ENCODE measurements at regions of chr12 and their contacts with region 1.

Region 1: DNA sequence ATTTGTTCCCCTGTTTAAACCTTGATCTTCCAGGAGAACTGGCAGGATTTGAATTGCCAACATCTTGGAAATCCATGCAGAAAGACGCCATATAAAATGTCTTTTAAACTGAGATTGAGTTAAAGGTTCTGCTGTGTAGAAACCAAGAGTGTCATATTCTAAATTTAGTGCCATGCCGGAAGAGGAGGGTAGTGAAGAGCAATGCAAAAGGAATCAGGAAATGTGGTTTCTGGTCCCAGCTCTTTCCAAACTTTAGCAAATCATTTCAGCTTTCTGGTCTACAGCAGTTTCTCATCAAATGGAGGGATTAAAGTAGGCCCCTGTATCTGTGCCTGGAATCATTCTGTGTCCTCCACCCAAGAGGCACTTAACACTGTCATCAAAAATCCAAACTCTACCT is 85.7 kb downstream of the BTG1 start:
- DNase-seq: no peak
- H3K4me3 Mint-ChIP-seq: no peak overlapping the region
- H3K27ac Mint-ChIP-seq: no peak overlapping the region
- H3K4me1 Mint-ChIP-seq: peaks cover 73% of the 10 kb centered on the region
- H3K27me3 Mint-ChIP-seq: no peaks in the 10 kb centered on the region

Region 2: GRCh38 chr12:91811481-91812287 is 248.3 kb before region 1 on chr12:
- intact Hi-C with region 1: loop called (anchors 10 kb)
- DNase-seq: peak; percentile 37
- H3K4me3 Mint-ChIP-seq: no peak overlapping the region
- H3K27ac Mint-ChIP-seq: no peak overlapping the region
- H3K4me1 Mint-ChIP-seq: peaks cover 15% of the 10 kb centered on the region
- H3K27me3 Mint-ChIP-seq: no peaks in the 10 kb centered on the region

Region 3: DNA sequence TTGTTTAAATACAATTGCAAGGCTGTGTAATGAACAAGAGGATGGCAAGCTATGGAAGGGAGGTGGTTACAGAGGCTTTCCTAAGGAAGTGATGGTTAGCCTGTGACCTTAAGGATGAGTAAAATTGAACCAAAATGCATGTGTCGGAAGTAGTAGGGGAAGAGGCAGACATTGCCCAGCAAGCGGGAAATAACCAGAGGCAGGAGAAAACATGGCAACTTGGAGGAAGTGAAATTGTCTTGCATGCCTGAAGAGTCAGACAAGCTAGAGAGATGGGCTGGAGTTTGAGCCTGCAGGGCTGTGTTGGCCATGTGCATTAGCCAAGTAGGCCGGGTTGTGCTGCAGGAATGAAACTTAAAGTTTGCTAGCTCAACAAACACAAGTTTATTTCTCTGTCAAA is 10.6 kb before region 1 on chr12:
- intact Hi-C with region 1: loop called (anchors 1 kb)
- DNase-seq: no peak
- H3K4me3 Mint-ChIP-seq: no peak overlapping the region
- H3K27ac Mint-ChIP-seq: no peak overlapping the region
- H3K4me1 Mint-ChIP-seq: peaks cover 71% of the 10 kb centered on the region
- H3K27me3 Mint-ChIP-seq: no peaks in the 10 kb centered on the region

Region 4: DNA sequence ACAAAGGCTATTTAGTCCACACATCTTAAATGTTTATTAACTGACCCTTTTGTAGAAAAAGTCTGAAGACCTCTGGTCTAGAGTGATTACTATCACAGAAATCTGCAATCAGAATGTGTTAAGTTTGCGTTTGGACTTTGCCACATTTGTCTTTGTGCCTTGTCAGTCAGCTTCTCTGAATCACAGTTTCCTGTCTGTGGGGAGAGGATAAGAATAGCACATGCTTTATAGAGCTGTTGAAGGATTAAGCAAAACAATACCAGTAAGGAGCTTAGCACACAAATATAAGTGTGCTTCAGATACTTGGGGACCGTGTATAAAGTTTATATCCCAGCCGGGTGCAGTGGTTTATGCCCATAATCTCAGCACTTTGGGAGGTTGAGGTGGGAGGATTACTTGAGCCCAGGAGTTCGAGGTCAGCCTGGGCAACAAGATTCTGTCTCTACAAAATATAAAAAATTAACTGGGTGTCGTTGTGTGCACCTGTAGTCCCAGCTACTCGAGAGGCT is 148.7 kb after region 1 on chr12:
- intact Hi-C with region 1: loop called (anchors 10 kb)
- DNase-seq: peak; percentile 19
- H3K4me3 Mint-ChIP-seq: peak overlapping the region; percentile 22
- H3K27ac Mint-ChIP-seq: peak overlapping the region; percentile 24
- H3K4me1 Mint-ChIP-seq: peaks cover 37% of the 10 kb centered on the region
- H3K27me3 Mint-ChIP-seq: no peaks in the 10 kb centered on the region

Measured in activated T-helper 2 cell treated with anti-CD3 and anti-CD28 coated beads, Interferon-gamma antibody, Interleukin-2, Interleukin-4, amounts not matched to agents 10 μg/mL and 5 μg/mL and 100 μg/mL, durations not matched to agents 14 hours and 24 hours and 36 hours (primary cell).